ENCODE measurements at regions of chr2 and their contacts with region 1.

Region 1: GRCh38 chr2:44361330-44362206 is at the starts of genes CAMKMT and PREPL:
- DNase-seq: peak; percentile 97
- CTCF ChIP-seq: no peak

Region 2: GRCh38 chr2:44218771-44219170 is 142.8 kb before region 1 on chr2:
- CTCF ChIA-PET with region 1: no interaction called
- POLR2A ChIA-PET with region 1: no interaction called
- DNase-seq: no peak
- CTCF ChIP-seq: no peak

Region 3: GRCh38 chr2:44348400-44348799 is 13.2 kb before region 1 on chr2:
- CTCF ChIA-PET with region 1: interaction called, 18 read pairs
- POLR2A ChIA-PET with region 1: interaction called, 7 read pairs
- DNase-seq: no peak
- CTCF ChIP-seq: no peak

Region 4: DNA sequence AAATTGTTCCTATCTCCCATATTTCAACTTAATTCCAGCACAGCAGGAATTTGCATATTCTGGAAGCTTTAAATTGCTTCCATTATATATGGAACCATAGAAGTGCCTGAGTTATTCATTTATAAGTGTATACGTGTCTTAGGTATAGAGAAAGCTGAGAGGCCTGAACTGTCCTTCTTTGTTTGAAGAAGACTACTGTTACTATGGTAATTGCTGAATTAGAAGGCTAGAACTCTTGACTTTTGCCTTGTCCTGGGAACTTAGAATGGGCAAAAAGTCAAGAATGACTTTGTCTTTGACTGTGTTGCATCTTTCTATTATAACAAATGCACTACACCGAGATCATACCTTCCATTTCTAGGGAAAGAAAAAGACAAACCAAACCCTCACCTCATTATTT is 15.9 kb after region 1 on chr2:
- CTCF ChIA-PET with region 1: interaction called, 24 read pairs
- POLR2A ChIA-PET with region 1: no interaction called
- DNase-seq: no peak
- CTCF ChIP-seq: no peak

Measured in GM10248 (cell line).